Activated CD4-positive, alpha-beta T cell treated with anti-CD3 and anti-CD28 coated beads, Interleukin-2, amount 10 ng/mL, durations not matched to agents 24 days and 14 days (primary cell): ENCODE measurements at regions of chrX and their contacts with region 1.

Region 1: GRCh38 chrX:129905787-129906580 is at the start of gene UTP14A:
- DNase-seq: peak; percentile 95
- H3K4me3 Mint-ChIP-seq: peak within 1 kb of the TSS; percentile 90
- H3K27ac Mint-ChIP-seq: peak within 1 kb of the TSS; percentile 95
- H3K4me1 Mint-ChIP-seq: peaks cover 11% of the 10 kb centered on the region
- H3K27me3 Mint-ChIP-seq: no peaks in the 10 kb centered on the region
- total RNA-seq, gene UTP14A: 57.9 and 58.1 TPM in 2 replicates

Region 2: DNA sequence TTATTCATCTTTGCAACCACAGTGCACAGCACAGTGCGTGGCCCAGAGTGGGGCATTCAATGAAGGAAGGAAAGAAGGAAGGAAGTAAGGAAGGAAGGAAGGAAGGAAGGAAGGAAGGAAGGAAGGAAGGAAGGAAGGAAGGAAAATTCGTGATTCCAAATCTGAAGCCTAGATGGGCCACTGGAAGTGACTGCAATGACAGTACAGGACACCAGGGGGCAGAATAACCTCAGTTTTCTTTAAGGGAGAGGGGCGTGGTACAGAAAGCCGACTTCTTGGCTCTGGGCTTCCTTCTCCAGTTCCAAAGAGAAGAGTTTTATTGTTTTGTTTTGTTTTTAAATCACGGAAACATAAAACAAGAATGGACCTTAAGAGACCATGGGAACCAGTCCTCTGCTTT is 299.1 kb before region 1 on chrX:
- intact Hi-C with region 1: loop called (anchors 5 kb)
- DNase-seq: peak; percentile 85
- H3K4me3 Mint-ChIP-seq: no peak overlapping the region
- H3K27ac Mint-ChIP-seq: no peak overlapping the region
- H3K4me1 Mint-ChIP-seq: peaks cover 17% of the 10 kb centered on the region
- H3K27me3 Mint-ChIP-seq: no peaks in the 10 kb centered on the region

Region 3: DNA sequence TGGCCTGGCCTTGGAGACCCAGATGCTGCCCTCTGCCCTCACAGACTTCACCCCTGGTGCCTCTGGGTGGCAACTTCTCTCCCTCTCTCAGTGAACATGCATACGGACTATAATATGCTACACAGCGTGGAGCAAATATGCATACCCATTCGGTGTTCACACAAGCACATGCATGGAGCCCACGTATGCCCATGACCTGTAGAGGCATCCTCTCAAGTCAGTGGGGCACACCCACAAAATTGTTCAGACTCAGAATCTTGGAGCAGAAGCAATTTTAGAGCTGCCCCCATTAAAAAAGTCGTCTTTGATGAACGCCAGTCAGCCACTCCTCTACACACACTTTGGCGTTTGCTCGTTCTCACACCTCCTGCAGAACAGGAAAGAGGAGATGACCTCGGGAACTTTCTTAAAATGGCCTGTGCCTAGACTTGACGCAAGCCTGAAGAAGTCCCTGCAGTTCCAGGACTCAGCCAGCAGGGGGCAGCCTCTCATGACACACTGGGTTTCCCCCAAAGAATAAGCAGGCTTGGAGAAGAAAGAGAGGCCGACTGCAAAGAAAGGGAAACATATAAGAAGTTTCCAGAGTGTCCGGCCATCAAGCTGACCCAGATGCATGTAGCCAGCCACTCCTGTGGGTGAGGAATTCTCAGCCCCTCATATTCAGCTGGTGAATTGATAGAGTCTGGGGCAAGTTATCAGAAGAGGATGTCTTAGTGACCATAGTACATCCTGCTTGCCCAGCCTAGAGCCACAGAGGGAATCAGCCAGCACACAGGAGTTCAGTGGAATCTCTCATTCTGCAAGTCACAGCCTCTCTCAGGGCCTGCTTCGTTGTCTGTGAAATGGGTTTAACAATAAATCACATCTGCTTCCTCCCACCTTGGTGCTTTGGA is 268.5 kb before region 1 on chrX:
- intact Hi-C with region 1: loop called (anchors 10 kb)
- DNase-seq: peak; percentile 90
- H3K4me3 Mint-ChIP-seq: no peak overlapping the region
- H3K27ac Mint-ChIP-seq: no peak overlapping the region
- H3K4me1 Mint-ChIP-seq: peaks cover 5% of the 10 kb centered on the region
- H3K27me3 Mint-ChIP-seq: no peaks in the 10 kb centered on the region

Region 4: GRCh38 chrX:129843459-129844306 is 62.3 kb before region 1 on chrX and contains the start of gene ZDHHC9:
- intact Hi-C with region 1: loop called (anchors 2 kb)
- DNase-seq: peak; percentile 95
- H3K4me3 Mint-ChIP-seq: peak within 1 kb of the TSS; percentile 91
- H3K27ac Mint-ChIP-seq: peak within 1 kb of the TSS; percentile 89
- H3K4me1 Mint-ChIP-seq: peaks cover 24% of the 10 kb centered on the region
- H3K27me3 Mint-ChIP-seq: peaks cover 9% of the 10 kb centered on the region
- total RNA-seq, gene ZDHHC9: 13.4 and 14.6 TPM in 2 replicates

Region 5: DNA sequence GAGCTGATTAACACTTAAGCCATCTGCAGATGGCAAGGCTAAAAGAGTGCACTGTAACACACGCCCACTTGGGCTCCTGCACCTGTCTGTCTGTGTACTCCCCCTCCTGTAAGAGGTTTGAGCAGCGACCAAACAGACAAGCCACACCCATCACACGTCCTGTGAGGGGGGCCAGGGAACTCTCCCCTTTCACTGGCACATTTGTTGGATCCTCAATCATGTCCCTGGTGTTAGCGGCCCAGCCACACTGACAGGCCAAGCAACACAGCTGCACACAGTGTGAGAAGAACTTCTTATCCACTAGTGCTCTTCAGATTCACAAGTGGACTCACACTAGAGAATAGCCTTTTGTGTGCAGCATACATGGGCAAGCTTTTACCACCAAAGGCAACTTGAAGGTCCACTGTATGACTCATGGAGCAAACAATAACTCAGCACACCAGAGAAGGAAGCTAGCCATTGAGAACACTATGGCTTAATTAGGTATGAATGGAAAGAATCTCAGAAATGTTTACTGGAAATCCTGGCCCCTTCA is 29.1 kb before region 1 on chrX:
- intact Hi-C with region 1: loop called (anchors 1 kb)
- DNase-seq: no peak
- H3K4me3 Mint-ChIP-seq: no peak overlapping the region
- H3K27ac Mint-ChIP-seq: no peak overlapping the region
- H3K4me1 Mint-ChIP-seq: no peaks in the 10 kb centered on the region
- H3K27me3 Mint-ChIP-seq: no peaks in the 10 kb centered on the region

Region 6: GRCh38 chrX:129996120-129996519 is 90.1 kb after region 1 on chrX:
- intact Hi-C with region 1: no loop called
- DNase-seq: no peak
- H3K4me3 Mint-ChIP-seq: no peak overlapping the region
- H3K27ac Mint-ChIP-seq: no peak overlapping the region
- H3K4me1 Mint-ChIP-seq: peaks cover 2% of the 10 kb centered on the region
- H3K27me3 Mint-ChIP-seq: no peaks in the 10 kb centered on the region